GM10248 (cell line): ENCODE measurements at regions of chr3 and their contacts with region 1.

Region 1: GRCh38 chr3:196837819-196838420 is 29.8 kb upstream of the SENP5 start:
- DNase-seq: peak; percentile 82
- CTCF ChIP-seq: peak; percentile 87

Region 2: GRCh38 chr3:196412704-196413103 is 425.2 kb before region 1 on chr3:
- CTCF ChIA-PET with region 1: no interaction called
- POLR2A ChIA-PET with region 1: no interaction called
- DNase-seq: no peak
- CTCF ChIP-seq: no peak

Region 3: DNA sequence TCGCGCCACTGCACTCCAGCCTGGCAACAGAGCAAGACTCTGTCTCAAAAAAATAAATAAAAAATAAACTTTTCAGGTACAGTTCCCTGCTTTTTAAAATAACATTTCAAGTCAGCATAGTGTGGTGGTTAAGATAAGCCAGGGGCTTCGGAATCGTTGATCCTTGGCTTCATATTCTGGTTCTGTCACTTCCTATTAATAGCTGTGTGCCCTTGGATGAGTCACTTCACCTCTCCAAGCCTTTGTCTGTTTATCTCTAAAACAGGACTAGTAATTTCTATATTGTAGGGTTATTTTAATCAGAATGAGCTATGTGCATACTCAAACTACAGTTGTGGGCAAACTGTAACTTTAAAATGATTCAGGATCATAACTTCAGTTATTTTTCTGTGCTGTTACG is 24.0 kb before region 1 on chr3:
- CTCF ChIA-PET with region 1: interaction called, 16 read pairs
- POLR2A ChIA-PET with region 1: no interaction called
- DNase-seq: no peak
- CTCF ChIP-seq: no peak

Region 4: DNA sequence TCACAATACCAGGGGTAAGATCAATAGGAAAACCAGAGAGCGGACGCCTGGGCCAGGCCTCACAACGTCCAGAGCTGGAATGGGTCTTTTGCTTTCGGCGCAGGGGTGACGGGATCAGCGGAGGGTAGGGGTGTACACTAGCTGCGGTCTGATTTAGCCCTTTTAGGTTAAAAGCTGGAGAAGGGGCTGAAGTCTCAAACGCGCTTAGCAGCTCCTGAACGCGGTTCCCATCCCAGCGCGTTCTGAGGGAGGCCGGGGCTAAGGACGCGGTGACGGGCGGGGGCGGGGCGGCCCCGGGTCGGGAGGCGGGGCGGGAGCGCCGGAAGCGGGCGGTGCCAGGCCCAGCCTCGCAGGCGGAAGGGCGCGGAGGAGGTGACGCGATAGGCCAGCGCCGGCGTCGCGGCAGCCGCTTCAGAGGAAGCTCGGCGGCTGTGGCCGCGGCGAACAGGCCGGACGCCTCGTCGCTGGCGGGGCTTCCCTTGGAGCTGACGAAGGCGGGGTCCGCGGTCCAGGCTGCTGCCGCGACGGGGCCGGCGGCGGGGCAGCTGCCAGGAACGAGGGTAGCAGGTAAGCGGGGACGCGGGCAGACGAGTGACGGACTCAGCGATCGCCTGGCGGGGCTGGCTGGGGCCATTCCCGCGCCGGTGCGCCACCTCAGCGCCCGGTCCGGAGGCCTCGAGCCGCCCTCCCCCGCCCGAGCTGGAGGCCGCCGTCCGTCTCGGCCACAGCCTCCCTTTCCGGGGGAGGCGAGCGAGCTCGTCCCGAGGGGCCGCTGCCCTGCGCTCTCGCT is 29.8 kb after region 1 on chr3 and contains the start of gene SENP5:
- CTCF ChIA-PET with region 1: interaction called, 20 read pairs
- POLR2A ChIA-PET with region 1: interaction called, 5 read pairs
- DNase-seq: peak; percentile 97
- CTCF ChIP-seq: no peak

Region 5: DNA sequence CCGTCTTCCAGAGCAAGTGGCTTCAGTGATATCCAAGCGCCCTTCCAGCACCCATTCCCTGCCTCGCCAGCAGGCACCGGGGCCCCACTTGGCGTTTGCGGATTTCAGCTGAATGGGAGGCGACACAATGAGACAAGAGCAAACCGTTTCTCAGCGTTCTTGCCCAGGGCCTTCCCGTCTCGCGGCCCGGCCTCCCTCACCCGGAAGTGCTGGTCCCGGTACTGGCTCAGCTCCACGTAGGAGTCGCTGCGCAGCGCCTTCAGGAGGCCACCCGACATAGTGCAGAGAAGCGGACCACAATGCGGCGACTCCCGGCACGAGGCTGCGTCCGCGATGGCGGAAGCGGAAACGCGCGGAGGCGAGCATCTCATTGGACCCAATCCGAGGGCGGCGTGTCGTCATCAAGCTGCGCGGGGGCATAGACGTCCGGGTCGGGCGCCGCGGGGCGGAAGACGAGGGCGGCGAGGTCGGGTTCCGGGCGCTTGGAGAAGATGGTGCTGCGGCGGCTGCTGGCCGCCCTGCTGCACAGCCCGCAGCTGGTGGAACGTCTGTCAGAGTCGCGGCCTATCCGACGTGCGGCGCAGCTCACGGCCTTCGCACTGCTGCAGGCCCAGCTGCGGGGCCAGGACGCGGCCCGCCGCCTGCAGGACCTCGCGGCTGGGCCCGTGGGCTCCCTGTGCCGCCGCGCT is 104.5 kb after region 1 on chr3 and contains the start of gene NCBP2:
- CTCF ChIA-PET with region 1: interaction called, 16 read pairs
- POLR2A ChIA-PET with region 1: no interaction called
- DNase-seq: peak; percentile 97
- CTCF ChIP-seq: peak; percentile 75

Region 6: GRCh38 chr3:196969660-196970546 is 132.0 kb after region 1 on chr3:
- CTCF ChIA-PET with region 1: interaction called, 18 read pairs
- POLR2A ChIA-PET with region 1: no interaction called
- DNase-seq: peak; percentile 89
- CTCF ChIP-seq: peak; percentile 95